ENCODE measurements at regions of chr11 and their contacts with region 1.

Region 1: GRCh38 chr11:16917941-16918340 is 96.3 kb downstream of the PLEKHA7 start:
- DNase-seq: no peak
- ATAC-seq: no peak
- H3K4me3 ChIP-seq: no peak overlapping the region
- H3K27ac ChIP-seq: no peak overlapping the region
- H3K4me1 ChIP-seq: no peaks in the 10 kb centered on the region
- H3K27me3 ChIP-seq: no peaks in the 10 kb centered on the region
- CTCF ChIP-seq: no peak
- EP300 ChIP-seq: no peak
- POLR2A ChIP-seq: no peak
- RAD21 ChIP-seq: no peak

Region 2: DNA sequence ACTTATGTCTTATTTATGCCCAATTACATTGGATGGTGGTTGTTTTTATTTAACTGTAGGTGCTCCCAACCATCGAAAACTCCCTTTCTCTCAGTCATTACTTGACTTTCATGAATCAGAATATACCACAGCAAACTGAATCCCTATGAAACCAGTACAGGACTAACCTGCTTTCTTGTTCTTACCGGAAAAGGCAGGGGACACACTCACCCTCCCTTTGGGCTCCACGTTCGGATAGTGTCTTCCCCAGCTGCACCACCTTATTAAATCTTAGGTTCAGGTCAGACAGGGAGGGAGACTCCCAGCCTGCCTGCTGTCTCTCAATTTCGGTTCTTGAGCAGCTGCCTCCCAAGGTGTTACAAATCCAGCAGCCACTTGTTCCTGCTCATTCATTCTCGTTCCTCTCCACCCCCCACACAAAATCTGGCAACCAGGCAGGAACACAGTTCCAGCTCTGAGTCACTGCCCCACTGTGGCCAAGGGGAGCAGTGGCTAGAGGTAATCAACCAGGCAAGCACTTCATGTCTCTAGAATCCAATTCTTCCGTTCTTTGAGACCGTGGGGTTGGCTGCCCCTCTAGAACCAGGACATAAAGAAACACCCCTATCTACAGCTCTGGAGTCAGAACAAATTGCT is 36.7 kb before region 1 on chr11:
- CTCF ChIA-PET with region 1: interaction called, 3 read pairs
- POLR2A ChIA-PET with region 1: no interaction called
- RAD21 ChIA-PET with region 1: no interaction called
- SMC1A ChIA-PET with region 1: interaction called, 17 read pairs
- in situ Hi-C with region 1: no loop called
- intact Hi-C with region 1: no loop called
- DNase-seq: no peak
- ATAC-seq: peak; percentile 72
- H3K4me3 ChIP-seq: no peak overlapping the region
- H3K27ac ChIP-seq: no peak overlapping the region
- H3K4me1 ChIP-seq: peaks cover 3% of the 10 kb centered on the region; the same call in 1 of the 2 replicates
- H3K27me3 ChIP-seq: no peaks in the 10 kb centered on the region; a peak in 1 of 4 replicates
- CTCF ChIP-seq: peak in 1 of 3 experiments; percentile 21; a peak in 2 of 6 replicates
- EP300 ChIP-seq: no peak
- POLR2A ChIP-seq: no peak
- RAD21 ChIP-seq: peak; percentile 29

Region 3: DNA sequence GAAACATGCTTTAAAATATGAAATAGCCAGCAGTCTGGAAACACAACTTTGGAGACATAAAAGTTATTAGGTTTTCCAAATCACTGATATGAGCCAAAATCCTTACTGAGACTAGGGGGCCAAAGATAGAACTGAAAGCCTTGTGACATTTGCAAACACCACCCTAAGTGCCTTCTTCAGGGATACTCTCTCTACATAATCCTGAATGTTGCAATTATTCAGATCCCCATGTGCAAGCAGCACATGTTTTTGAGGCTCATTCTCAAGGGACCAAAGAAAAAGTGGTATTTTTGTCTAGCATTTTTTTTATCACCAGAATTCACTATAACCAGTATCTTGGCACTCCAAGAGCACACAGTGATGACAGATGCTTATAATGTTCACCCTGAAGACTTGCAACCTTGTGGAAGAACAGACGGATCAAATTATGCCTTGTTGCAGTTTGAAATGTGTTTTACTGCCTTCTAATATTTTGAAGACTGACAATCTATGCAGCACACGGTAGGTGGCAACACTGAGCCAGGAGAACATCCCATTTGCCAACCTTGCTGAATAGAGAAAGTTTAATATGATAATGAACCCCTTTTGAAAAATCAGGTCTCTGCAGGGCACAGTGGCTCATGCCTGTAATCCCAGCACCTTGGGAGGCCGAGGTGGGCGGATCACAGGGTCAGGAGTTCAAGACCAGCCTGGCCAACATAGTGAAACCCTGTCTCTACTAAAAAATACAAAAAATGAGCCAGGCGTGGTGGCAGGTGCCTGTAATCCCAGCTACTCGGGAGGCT is 17.8 kb after region 1 on chr11:
- CTCF ChIA-PET with region 1: interaction called, 11 read pairs
- POLR2A ChIA-PET with region 1: no interaction called
- RAD21 ChIA-PET with region 1: interaction called, 4 read pairs
- SMC1A ChIA-PET with region 1: interaction called, 8 read pairs
- in situ Hi-C with region 1: no loop called
- intact Hi-C with region 1: no loop called
- DNase-seq: no peak
- ATAC-seq: peak; percentile 88
- H3K4me3 ChIP-seq: no peak overlapping the region
- H3K27ac ChIP-seq: no peak overlapping the region
- H3K4me1 ChIP-seq: no peaks in the 10 kb centered on the region
- H3K27me3 ChIP-seq: no peaks in the 10 kb centered on the region; a peak in 1 of 4 replicates
- CTCF ChIP-seq: peak; percentile 64 to 85 (median 78)
- EP300 ChIP-seq: no peak
- POLR2A ChIP-seq: no peak
- RAD21 ChIP-seq: peak; percentile 86

Region 4: GRCh38 chr11:16956538-16957153 is 38.7 kb after region 1 on chr11:
- CTCF ChIA-PET with region 1: no interaction called
- POLR2A ChIA-PET with region 1: no interaction called
- RAD21 ChIA-PET with region 1: no interaction called
- SMC1A ChIA-PET with region 1: no interaction called
- in situ Hi-C with region 1: no loop called
- intact Hi-C with region 1: no loop called
- DNase-seq: no peak
- ATAC-seq: no peak
- H3K4me3 ChIP-seq: no peak overlapping the region
- H3K27ac ChIP-seq: no peak overlapping the region
- H3K4me1 ChIP-seq: no peaks in the 10 kb centered on the region; the same call in none of the 2 replicates
- H3K27me3 ChIP-seq: no peaks in the 10 kb centered on the region
- CTCF ChIP-seq: no peak
- EP300 ChIP-seq: no peak
- POLR2A ChIP-seq: no peak
- RAD21 ChIP-seq: no peak

Region 5: GRCh38 chr11:16969010-16969999 is 51.4 kb after region 1 on chr11:
- CTCF ChIA-PET with region 1: no interaction called
- POLR2A ChIA-PET with region 1: no interaction called
- RAD21 ChIA-PET with region 1: no interaction called
- SMC1A ChIA-PET with region 1: no interaction called
- in situ Hi-C with region 1: no loop called
- intact Hi-C with region 1: no loop called
- DNase-seq: no peak
- ATAC-seq: no peak
- H3K4me3 ChIP-seq: no peak overlapping the region
- H3K27ac ChIP-seq: no peak overlapping the region
- H3K4me1 ChIP-seq: no peaks in the 10 kb centered on the region
- H3K27me3 ChIP-seq: no peaks in the 10 kb centered on the region; a peak in 1 of 4 replicates
- CTCF ChIP-seq: no peak
- EP300 ChIP-seq: no peak
- POLR2A ChIP-seq: no peak
- RAD21 ChIP-seq: no peak

Region 6: DNA sequence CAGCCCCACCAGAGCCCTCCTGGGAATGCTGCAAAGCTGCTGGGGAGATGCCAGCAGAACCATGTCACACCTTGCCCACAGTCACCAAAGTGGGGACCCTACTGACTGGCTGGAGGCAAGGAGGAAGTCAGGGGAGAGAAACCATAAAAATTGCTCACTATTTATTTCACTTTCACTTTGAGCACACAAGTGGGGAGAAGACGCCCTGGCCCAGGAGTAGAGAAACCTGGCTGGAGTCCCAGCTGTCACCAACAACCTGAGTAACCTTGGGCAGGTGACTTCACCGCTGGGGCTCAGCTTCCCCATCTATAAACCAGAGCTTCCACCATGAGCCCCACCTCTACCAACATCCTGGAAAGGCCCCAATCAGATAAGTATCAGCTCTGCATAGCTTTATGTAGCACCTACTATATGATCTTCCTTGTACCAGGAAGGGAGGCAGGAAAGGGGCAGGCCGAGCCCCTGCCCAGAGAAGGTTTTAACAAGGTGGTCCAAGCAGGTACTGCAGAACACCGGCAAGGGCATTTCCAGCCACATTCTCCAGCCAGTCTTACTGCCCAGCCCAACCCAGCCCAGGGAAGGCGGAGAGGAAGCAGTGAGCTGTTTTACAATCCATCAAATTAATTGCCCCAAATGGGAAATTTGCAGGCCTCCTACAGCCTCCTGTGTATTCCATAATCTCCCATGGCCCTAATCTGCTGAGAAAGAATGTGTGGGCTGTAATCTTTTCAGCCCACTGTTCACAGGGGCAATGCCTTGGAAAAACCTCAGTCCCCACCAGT is 68.7 kb after region 1 on chr11:
- CTCF ChIA-PET with region 1: no interaction called
- POLR2A ChIA-PET with region 1: no interaction called
- RAD21 ChIA-PET with region 1: no interaction called
- SMC1A ChIA-PET with region 1: no interaction called
- in situ Hi-C with region 1: no loop called
- intact Hi-C with region 1: no loop called
- DNase-seq: peak; percentile 75
- ATAC-seq: peak; percentile 98
- H3K4me3 ChIP-seq: no peak overlapping the region
- H3K27ac ChIP-seq: no peak overlapping the region
- H3K4me1 ChIP-seq: peaks cover 12% of the 10 kb centered on the region
- H3K27me3 ChIP-seq: no peaks in the 10 kb centered on the region
- CTCF ChIP-seq: no peak
- EP300 ChIP-seq: no peak
- POLR2A ChIP-seq: no peak
- RAD21 ChIP-seq: no peak